Transverse colon (tissue), 4 donors: ENCODE measurements at regions of chr10 and their contacts with region 1.

Region 1: DNA sequence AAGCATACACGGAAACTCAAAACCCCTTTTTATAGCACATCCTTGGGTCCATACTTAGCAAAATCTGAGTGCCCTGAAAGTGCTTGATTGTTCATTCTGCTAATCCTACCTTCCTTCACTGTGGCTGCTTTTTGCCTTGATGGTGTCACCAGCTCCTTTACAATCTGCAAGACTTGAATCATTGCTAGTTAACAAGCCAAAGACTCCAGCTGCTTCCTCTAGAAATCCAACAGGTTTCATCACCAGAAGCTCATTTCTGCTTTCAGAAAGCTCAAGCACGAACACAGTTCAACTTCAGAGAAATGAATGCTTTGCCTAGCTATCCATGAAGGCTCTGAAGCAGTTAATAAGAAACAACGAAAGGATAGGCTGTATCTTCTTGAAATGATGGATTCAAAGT is 38.0 kb downstream of the USP6NL start:
- DNase-seq: no peak
- H3K4me3 ChIP-seq: no peak overlapping the region
- H3K27ac ChIP-seq: no peak overlapping the region
- H3K4me1 ChIP-seq: peaks cover 0 to 18% (median 2%) of the 10 kb centered on the region in 4 donors
- H3K27me3 ChIP-seq: no peaks in the 10 kb centered on the region
- CTCF ChIP-seq: no peak
- EP300 ChIP-seq: no peak
- POLR2A ChIP-seq: no peak

Region 2: DNA sequence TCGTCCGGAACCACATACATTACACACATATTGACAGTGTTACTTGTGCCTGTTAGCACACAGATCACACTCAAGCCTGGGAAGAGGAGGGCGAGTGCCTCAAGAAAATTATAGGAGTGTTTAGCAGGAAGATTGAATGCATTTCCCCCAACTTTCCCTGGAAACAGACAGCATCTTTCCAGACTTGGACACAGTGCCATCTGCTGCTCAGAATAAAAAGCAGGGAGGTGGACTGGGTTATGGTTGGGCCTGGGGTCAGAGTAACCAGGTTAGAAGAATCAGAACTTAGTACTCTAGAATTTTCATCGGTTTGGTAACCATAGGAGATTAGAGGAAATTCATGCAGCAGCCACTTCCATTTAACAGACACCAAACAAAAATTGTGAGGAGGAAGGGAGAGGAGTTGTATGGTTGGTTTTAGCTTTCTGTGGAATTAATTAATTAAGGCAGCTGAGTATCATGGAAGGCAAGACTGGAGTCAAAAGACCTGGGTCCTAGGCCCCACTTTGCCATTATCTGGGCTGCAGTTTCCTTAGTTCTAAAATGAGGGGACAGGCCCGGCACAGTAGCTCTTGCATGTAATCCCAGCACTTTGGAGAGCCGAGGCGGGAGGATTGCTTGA is 1483.1 kb after region 1 on chr10:
- in situ Hi-C with region 1: no loop called
- intact Hi-C with region 1: loop called (anchors 10 kb)
- DNase-seq: no peak
- H3K4me3 ChIP-seq: no peak overlapping the region
- H3K27ac ChIP-seq: no peak overlapping the region
- H3K4me1 ChIP-seq: no peaks in the 10 kb centered on the region
- H3K27me3 ChIP-seq: no peaks in the 10 kb centered on the region
- CTCF ChIP-seq: peak in 2 of 5 experiments; percentile 11 to 25
- EP300 ChIP-seq: no peak
- POLR2A ChIP-seq: no peak